Testis (tissue), 5 donors: ENCODE measurements at regions of chr12 and their contacts with region 1.

Region 1: DNA sequence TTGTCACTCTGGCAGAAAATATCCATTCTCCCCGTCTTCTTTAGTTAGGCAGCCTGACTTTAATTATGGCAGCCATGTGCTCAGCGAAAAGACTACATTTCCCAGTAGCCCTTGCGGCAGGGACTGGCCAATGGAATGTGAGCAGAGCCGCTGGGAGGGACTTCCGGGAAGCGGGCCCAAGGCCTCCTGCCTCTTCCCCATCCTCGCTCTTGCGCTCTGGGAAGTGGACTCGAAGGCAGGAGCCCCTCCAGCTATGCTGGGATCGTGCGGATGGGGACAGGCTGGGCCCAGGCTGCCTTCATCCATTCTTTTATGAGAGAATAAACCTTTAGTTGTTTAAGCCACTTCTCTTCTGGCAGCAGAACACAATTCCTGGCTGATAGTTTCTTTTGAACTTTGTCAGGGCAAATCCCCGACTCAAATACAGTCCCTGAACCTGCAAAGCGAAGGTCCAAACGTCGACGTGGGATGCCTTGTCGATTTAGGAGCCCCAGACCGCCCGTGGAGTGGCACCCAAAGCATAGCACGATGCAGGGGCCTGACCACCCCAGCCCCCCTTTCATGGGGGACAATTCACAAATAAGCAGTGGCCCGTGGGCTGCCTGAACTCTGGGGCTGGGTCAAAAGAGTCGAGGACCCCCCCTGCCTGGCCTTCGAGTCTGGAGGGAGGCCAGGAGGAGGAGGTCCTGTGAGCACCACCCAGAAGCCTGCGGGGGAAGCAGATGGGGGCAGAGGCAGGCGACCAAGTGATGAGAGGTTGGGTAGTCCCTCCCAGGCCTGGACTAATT is 15.6 kb upstream of the LRTM2 start:
- DNase-seq: peak; percentile 96
- H3K4me3 ChIP-seq: no peak overlapping the region
- H3K27ac ChIP-seq: no peak overlapping the region
- H3K4me1 ChIP-seq: no peaks in the 10 kb centered on the region
- H3K27me3 ChIP-seq: no peaks in the 10 kb centered on the region
- CTCF ChIP-seq: no peak
- POLR2A ChIP-seq: no peak

Region 2: GRCh38 chr12:1978078-1978862 is 173.5 kb after region 1 on chr12:
- intact Hi-C with region 1: no loop called
- DNase-seq: no peak
- H3K4me3 ChIP-seq: no peak overlapping the region
- H3K27ac ChIP-seq: no peak overlapping the region
- H3K4me1 ChIP-seq: no peaks in the 10 kb centered on the region
- H3K27me3 ChIP-seq: no peaks in the 10 kb centered on the region
- CTCF ChIP-seq: no peak
- POLR2A ChIP-seq: no peak

Region 3: GRCh38 chr12:2034633-2035430 is 230.1 kb after region 1 on chr12:
- intact Hi-C with region 1: loop called (anchors 10 kb)
- DNase-seq: peak; percentile 92
- H3K4me3 ChIP-seq: peak overlapping the region in 1 of 2 donors; percentile 35
- H3K27ac ChIP-seq: no peak overlapping the region
- H3K4me1 ChIP-seq: peaks cover 5% of the 10 kb centered on the region
- H3K27me3 ChIP-seq: no peaks in the 10 kb centered on the region
- CTCF ChIP-seq: peak; percentile 90 to 94 (median 90)
- POLR2A ChIP-seq: no peak

Region 4: DNA sequence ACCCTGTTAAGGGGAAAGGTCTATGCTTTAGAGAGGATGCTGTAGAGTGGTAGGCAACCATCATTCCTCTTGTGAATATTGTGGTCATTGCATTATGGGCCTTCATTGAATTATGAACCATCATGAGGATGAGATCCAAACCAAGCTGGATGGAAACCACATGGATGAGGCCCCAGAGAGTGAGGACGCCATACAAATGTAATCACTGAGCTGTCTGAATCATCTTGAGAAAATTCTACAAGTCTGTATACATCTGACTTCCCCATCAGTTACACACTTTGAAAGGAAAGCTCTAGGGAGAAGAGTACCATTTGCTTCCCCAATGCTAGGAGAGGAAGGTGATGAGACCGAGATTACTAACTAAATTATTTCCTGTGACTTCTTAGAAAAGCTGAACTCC is 421.0 kb after region 1 on chr12:
- intact Hi-C with region 1: no loop called
- DNase-seq: no peak
- H3K4me3 ChIP-seq: no peak overlapping the region
- H3K27ac ChIP-seq: no peak overlapping the region
- H3K4me1 ChIP-seq: no peaks in the 10 kb centered on the region
- H3K27me3 ChIP-seq: no peaks in the 10 kb centered on the region
- CTCF ChIP-seq: no peak
- POLR2A ChIP-seq: no peak